Activated CD4-positive, alpha-beta memory T cell treated with anti-CD3 and anti-CD28 coated beads for 36 hours (primary cell): ENCODE measurements at regions of chr12 and their contacts with region 1.

Region 1: GRCh38 chr12:49967042-49967776 is 5.5 kb downstream of the AQP5 start:
- DNase-seq: peak; percentile 94
- H3K4me3 Mint-ChIP-seq: peak overlapping the region; percentile 51
- H3K27ac Mint-ChIP-seq: no peak overlapping the region
- H3K4me1 Mint-ChIP-seq: peaks cover 2% of the 10 kb centered on the region
- H3K27me3 Mint-ChIP-seq: peaks cover 32% of the 10 kb centered on the region

Region 2: GRCh38 chr12:49903695-49904423 is 63.4 kb before region 1 on chr12 and contains the start of gene FAIM2:
- CTCF ChIA-PET with region 1: interaction called, 11 read pairs
- POLR2A ChIA-PET with region 1: no interaction called
- intact Hi-C with region 1: no loop called
- DNase-seq: peak; percentile 68
- H3K4me3 Mint-ChIP-seq: peak within 1 kb of the TSS; percentile 71
- H3K27ac Mint-ChIP-seq: no peak within 1 kb of the TSS
- H3K4me1 Mint-ChIP-seq: peaks cover 15% of the 10 kb centered on the region
- H3K27me3 Mint-ChIP-seq: no peaks in the 10 kb centered on the region
- total RNA-seq, gene FAIM2: 1.7 to 2.1 TPM

Region 3: GRCh38 chr12:49983892-49984291 is 16.7 kb after region 1 on chr12:
- CTCF ChIA-PET with region 1: interaction called, 107 read pairs
- POLR2A ChIA-PET with region 1: no interaction called
- intact Hi-C with region 1: no loop called
- DNase-seq: no peak
- H3K4me3 Mint-ChIP-seq: no peak overlapping the region
- H3K27ac Mint-ChIP-seq: no peak overlapping the region
- H3K4me1 Mint-ChIP-seq: peaks cover 4% of the 10 kb centered on the region
- H3K27me3 Mint-ChIP-seq: no peaks in the 10 kb centered on the region

Region 4: DNA sequence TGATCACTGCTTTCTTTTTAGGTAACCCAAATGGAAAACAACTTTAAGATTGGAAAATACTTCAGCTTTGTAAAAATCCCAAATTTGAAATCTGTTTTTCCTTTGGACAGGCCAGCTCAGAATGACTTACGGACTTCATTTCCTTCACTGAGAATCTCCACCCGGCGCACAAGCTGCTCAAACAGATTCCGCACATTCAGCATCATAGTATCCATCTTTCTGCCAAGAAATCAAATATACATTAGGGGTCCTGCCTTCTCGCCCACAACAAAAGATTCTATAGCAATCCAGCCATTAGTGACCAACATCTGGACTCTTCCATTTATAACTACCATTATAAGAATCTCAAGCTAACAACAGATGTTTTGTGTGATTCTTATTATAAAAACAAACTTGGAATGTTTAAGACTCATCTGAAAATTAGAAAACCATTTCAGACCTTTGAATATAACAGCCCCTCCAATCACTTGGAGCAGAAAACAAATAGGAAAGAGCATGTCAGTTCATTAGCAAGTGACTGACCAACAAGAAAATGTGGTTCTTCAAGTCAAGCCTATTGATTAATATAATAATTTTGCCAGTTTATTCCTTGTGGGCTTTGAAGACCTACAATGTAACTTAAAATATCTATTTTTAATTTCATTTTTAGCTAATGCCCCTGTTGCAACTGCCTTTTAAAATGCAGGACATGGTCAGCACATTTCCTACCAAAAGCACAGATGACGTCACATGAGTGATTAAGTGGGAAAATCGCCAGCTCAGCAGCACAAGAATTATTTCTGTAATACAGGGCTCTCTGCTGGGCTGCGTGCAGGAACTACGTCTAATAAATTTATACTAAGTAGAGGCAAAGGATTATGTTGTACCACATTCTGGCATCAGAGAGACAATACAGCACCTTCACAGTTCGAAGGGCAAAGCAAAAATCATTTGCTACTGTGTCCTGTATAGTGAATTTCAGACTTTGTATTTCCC is 49.6 kb after region 1 on chr12:
- CTCF ChIA-PET with region 1: interaction called, 16 read pairs
- POLR2A ChIA-PET with region 1: no interaction called
- intact Hi-C with region 1: no loop called
- DNase-seq: no peak
- H3K4me3 Mint-ChIP-seq: no peak overlapping the region
- H3K27ac Mint-ChIP-seq: no peak overlapping the region
- H3K4me1 Mint-ChIP-seq: peaks cover 16% of the 10 kb centered on the region
- H3K27me3 Mint-ChIP-seq: no peaks in the 10 kb centered on the region

Region 5: DNA sequence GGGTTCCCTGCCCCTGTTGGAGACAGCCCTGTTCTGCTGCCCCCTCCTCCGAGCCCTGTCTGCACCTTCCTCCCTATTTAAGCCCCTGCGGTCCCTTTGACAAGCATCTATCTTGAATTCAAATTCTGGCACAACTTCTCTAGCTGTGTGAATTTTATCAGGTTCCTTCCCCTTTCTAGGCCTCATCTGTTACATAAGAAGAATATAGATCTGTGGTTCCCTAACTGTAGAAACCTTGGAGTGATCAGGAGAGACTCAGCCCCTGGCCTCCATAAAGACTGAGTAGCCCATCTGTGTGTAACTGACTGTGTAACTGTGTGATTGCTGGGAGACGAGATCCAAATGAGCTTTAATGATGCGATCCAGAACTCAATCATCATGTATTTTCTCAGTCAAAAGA is 71.1 kb after region 1 on chr12:
- CTCF ChIA-PET with region 1: interaction called, 72 read pairs
- POLR2A ChIA-PET with region 1: interaction called, 3 read pairs
- intact Hi-C with region 1: no loop called
- DNase-seq: no peak
- H3K4me3 Mint-ChIP-seq: no peak overlapping the region
- H3K27ac Mint-ChIP-seq: no peak overlapping the region
- H3K4me1 Mint-ChIP-seq: peaks cover 12% of the 10 kb centered on the region
- H3K27me3 Mint-ChIP-seq: peaks cover 2% of the 10 kb centered on the region

Region 6: DNA sequence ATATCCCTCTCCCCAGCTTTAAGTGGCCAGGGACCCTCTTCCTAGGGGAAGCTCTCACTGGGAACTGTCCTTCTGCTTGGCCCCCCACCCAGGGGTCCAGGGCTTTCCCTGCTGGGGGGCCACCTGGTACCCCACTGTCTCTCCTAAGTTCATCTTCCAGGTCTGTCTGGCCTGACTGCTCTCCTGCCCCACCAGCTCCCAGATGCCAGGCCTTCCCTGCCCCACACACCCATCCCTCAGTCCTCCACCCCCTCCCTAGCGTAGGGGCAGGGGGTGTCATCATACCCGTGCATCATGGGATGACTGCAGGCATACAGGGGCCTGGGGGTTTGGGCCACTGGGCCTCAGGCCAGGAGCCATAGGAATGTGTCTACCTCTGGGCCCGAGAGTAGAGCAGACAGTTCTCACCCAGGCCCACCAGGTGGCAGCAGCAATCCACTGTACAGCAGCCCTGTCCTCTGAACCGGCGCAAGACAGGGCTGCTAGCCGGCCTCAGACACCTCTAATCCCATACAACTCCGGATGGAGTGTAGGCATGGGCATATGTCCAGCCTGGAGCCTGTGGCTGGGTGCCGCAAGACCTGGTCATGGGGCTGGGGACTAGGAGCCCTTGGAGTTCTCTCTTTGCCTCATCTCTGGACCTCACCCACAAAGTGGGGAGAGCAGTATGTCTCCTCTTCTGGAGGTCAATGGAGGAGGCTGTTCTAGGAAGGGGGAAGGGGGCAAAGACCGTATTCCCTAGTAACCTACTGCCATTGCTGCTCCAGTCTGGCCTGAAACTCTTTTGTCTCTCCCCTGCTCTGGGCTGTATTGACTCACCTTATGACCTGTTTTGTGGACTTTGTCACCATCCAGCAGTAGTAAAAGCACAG is 108.0 kb after region 1 on chr12:
- CTCF ChIA-PET with region 1: interaction called, 259 read pairs
- POLR2A ChIA-PET with region 1: no interaction called
- intact Hi-C with region 1: loop called (anchors 1 kb)
- DNase-seq: peak; percentile 87
- H3K4me3 Mint-ChIP-seq: no peak overlapping the region
- H3K27ac Mint-ChIP-seq: no peak overlapping the region
- H3K4me1 Mint-ChIP-seq: peaks cover 7% of the 10 kb centered on the region
- H3K27me3 Mint-ChIP-seq: no peaks in the 10 kb centered on the region